ENCODE measurements at regions of chr2 and their contacts with region 1.

Region 1: DNA sequence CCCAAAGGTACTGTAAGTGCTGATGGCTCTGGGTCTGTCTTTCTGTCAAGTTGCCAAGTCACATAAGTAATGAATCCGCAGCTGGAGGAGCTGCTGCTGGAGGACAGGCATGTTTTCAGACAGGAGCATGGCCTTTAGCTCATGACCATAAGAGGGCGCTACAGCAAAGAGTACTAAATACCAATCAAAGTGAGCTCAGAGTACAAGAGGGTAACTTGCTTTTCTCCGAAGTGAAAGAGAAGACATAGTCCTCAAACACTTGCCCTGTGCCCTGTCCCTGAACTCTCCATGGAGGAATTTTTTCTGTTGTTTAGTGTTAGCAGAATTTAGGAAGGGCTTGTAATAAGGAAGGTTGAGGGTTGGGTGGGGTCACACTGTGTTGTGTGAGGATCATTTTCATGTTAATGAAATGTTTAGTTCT is 58.0 kb upstream of the EML6 start:
- DNase-seq: peak in 1 of 2 experiments; percentile 61
- H3K4me3 ChIP-seq: no peak overlapping the region
- H3K27ac ChIP-seq: no peak overlapping the region
- H3K4me1 ChIP-seq: peaks cover 0 to 3% (median 0%) of the 10 kb centered on the region in 4 experiments; a peak in 3 of 7 replicates
- H3K27me3 ChIP-seq: no peaks in the 10 kb centered on the region
- CTCF ChIP-seq: peak; percentile 46 to 81 (median 64)
- EP300 ChIP-seq: no peak
- POLR2A ChIP-seq: no peak
- RAD21 ChIP-seq: peak; percentile 60 to 72

Region 2: GRCh38 chr2:54566896-54567295 is 98.5 kb before region 1 on chr2:
- CTCF ChIA-PET with region 1: no interaction called
- POLR2A ChIA-PET with region 1: no interaction called
- DNase-seq: no peak
- H3K4me3 ChIP-seq: no peak overlapping the region
- H3K27ac ChIP-seq: no peak overlapping the region
- H3K4me1 ChIP-seq: peaks cover 5 to 20% (median 18%) of the 10 kb centered on the region in 4 experiments
- H3K27me3 ChIP-seq: no peaks in the 10 kb centered on the region
- CTCF ChIP-seq: no peak
- EP300 ChIP-seq: no peak
- POLR2A ChIP-seq: no peak
- RAD21 ChIP-seq: no peak

Region 3: DNA sequence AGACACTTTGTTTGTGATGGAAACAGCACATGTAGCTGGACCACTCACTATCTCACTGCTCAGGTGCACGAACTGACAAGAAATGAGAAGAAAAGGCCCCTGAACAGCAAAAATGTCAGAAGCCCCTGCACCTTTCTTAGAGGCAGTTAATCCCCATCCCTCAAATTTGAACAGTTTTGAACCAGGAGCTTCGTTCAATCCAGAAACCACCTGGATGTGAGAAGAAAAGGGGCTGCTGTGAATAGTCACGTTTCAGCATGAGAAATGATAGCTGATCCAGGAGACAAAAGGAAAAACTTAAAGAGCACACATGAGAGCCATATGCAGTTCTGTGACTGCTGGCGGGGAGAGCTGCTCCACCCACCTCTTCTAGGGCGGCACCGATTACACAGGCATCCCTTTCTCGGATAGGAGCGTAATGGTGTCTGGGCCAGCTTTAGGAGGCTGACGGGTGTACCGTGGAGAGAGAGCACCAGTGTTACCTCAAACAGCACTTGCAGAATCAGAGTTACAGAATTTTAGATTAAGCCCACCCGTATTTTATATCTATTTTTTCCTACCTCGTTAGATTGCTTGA is 59.0 kb before region 1 on chr2:
- CTCF ChIA-PET with region 1: interaction called, 10 read pairs
- POLR2A ChIA-PET with region 1: no interaction called
- DNase-seq: no peak
- H3K4me3 ChIP-seq: no peak overlapping the region
- H3K27ac ChIP-seq: no peak overlapping the region
- H3K4me1 ChIP-seq: peaks cover 3 to 24% (median 9%) of the 10 kb centered on the region in 4 experiments
- H3K27me3 ChIP-seq: no peaks in the 10 kb centered on the region
- CTCF ChIP-seq: no peak
- EP300 ChIP-seq: no peak
- POLR2A ChIP-seq: no peak
- RAD21 ChIP-seq: no peak

Region 4: DNA sequence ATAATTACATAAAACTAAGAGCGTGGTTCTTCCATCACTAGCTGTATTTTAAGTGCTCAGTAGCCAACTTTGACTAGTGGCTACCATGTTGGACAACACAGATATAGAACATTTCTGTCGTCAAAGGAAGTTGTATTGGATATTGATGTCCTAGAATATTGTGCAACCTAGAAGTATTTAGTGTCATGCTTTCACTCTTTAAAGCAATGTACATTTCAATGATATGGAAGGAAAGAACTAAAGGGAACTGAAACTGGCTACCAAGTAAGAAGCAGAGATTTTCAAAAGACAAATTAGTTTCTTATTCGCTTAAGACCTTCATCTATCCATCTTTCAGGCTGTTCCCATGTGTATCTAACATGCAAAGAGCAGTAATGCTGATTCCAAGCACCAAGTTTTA is 27.3 kb before region 1 on chr2:
- CTCF ChIA-PET with region 1: interaction called, 22 read pairs
- POLR2A ChIA-PET with region 1: no interaction called
- DNase-seq: no peak
- H3K4me3 ChIP-seq: no peak overlapping the region
- H3K27ac ChIP-seq: no peak overlapping the region
- H3K4me1 ChIP-seq: peaks cover 0 to 3% (median 0%) of the 10 kb centered on the region in 4 experiments; a peak in 1 of 7 replicates
- H3K27me3 ChIP-seq: no peaks in the 10 kb centered on the region
- CTCF ChIP-seq: no peak
- EP300 ChIP-seq: no peak
- POLR2A ChIP-seq: no peak
- RAD21 ChIP-seq: no peak

Region 5: DNA sequence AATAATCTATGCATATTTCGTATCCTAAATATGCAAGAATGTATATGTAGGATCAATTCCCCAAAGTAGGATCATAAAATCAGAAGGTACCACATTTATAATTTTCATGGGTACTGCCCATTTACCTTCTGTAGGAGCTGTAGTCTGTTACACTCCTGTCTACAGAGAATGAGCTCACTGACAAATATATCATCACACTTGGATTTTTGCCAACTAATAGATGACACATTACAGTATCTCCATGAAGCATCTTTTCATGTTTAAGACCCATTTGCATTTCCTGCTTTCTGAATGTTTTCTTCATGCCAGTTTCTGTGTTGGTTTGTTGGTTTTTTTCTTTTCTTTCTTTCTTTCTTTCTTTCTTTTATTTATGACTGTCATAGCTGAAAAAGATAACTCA is 12.9 kb before region 1 on chr2:
- CTCF ChIA-PET with region 1: interaction called, 47 read pairs
- POLR2A ChIA-PET with region 1: no interaction called
- DNase-seq: no peak
- H3K4me3 ChIP-seq: no peak overlapping the region
- H3K27ac ChIP-seq: no peak overlapping the region
- H3K4me1 ChIP-seq: no peaks in the 10 kb centered on the region
- H3K27me3 ChIP-seq: no peaks in the 10 kb centered on the region
- CTCF ChIP-seq: no peak
- EP300 ChIP-seq: no peak
- POLR2A ChIP-seq: no peak
- RAD21 ChIP-seq: no peak

Region 6: DNA sequence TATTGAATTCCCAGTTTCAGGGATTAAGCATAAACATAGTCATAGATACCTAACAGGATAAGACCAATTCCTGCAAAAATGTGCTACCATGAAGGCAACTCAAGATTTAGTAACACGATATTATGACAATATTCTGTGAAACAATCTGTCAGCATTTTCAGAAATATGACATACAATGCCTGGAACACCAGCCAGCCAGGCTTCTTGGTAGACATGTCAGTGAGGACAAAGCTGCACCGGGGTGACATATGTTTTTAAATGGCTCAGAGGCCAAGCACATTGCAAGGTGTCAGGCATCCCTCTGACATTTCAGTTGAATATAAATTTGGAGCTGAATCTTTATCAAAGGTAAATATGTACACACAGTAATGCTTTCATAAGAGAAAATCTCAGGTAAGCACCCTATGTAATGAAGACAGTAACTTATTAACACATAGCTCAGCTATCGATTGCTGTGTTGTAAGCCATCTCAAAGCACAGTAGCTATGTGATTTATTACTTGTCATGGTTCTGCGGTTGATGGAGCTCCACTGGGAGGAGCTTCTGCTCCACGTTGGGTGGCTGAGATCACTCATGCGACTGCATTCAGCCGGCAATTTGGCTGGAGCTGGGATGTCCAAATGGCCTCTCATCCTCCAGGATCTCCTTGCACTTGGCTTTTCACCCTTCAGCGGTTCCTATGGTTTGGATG is 26.1 kb after region 1 on chr2:
- CTCF ChIA-PET with region 1: interaction called, 43 read pairs
- POLR2A ChIA-PET with region 1: no interaction called
- DNase-seq: no peak
- H3K4me3 ChIP-seq: no peak overlapping the region
- H3K27ac ChIP-seq: no peak overlapping the region
- H3K4me1 ChIP-seq: no peaks in the 10 kb centered on the region
- H3K27me3 ChIP-seq: no peaks in the 10 kb centered on the region
- CTCF ChIP-seq: no peak
- EP300 ChIP-seq: no peak
- POLR2A ChIP-seq: no peak
- RAD21 ChIP-seq: peak; percentile 31 to 50; a peak in 3 of 4 replicates

Region 7: DNA sequence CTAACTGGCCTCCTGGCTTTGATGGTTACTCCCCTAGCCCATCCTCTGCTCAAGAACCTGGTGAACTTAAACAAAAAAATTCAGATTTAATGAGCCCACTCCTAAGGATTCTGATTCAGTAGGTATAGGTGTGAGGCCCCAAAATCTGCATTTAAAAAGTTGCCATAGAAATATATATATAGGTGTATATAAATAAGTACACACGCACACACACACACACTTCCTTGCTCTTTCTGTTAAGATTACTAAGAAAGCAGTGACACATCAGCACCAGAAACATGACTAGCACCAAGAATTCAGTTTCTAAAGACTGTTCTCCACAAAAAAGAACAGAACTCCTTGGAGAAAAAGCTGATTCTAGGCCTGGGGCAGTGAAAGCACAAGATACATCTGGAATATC is 75.8 kb after region 1 on chr2:
- CTCF ChIA-PET with region 1: no interaction called
- POLR2A ChIA-PET with region 1: no interaction called
- DNase-seq: no peak
- H3K4me3 ChIP-seq: no peak overlapping the region
- H3K27ac ChIP-seq: no peak overlapping the region
- H3K4me1 ChIP-seq: peaks cover 0 to 6% (median 2%) of the 10 kb centered on the region in 4 experiments; a peak in 2 of 7 replicates
- H3K27me3 ChIP-seq: no peaks in the 10 kb centered on the region
- CTCF ChIP-seq: no peak
- EP300 ChIP-seq: no peak
- POLR2A ChIP-seq: no peak
- RAD21 ChIP-seq: no peak

Region 8: DNA sequence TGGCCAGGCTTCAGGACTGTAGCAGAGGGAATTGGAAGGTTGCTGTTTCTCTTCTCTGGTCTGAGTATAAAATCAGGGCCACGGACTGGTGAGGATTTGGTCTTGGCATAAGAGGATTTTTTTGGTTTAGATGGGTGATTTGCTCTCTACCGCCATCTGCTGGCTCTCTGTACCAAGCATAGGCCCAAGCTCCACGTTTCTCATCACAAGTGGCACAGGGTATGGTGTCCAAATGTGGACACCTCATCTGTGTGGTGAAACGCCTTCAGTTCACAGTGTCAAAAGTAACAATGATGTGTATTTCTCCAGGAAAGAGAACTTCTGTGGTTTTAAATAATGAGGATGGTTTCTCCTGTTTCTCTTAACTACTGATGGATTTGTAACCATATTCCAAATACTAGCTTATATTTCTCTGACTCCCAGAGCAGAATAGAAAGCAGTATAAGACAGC is 173.2 kb after region 1 on chr2:
- CTCF ChIA-PET with region 1: interaction called, 10 read pairs
- POLR2A ChIA-PET with region 1: no interaction called
- DNase-seq: peak; percentile 27 to 81
- H3K4me3 ChIP-seq: no peak overlapping the region
- H3K27ac ChIP-seq: no peak overlapping the region
- H3K4me1 ChIP-seq: no peaks in the 10 kb centered on the region
- H3K27me3 ChIP-seq: no peaks in the 10 kb centered on the region; a peak in 2 of 7 replicates
- CTCF ChIP-seq: peak; percentile 69 to 88 (median 78)
- EP300 ChIP-seq: no peak
- POLR2A ChIP-seq: no peak
- RAD21 ChIP-seq: peak; percentile 68 to 76

Region 9: GRCh38 chr2:54895727-54896126 is 230.3 kb after region 1 on chr2:
- CTCF ChIA-PET with region 1: no interaction called
- POLR2A ChIA-PET with region 1: no interaction called
- DNase-seq: no peak
- H3K4me3 ChIP-seq: no peak overlapping the region
- H3K27ac ChIP-seq: no peak overlapping the region
- H3K4me1 ChIP-seq: no peaks in the 10 kb centered on the region
- H3K27me3 ChIP-seq: no peaks in the 10 kb centered on the region
- CTCF ChIP-seq: no peak
- EP300 ChIP-seq: no peak
- POLR2A ChIP-seq: no peak
- RAD21 ChIP-seq: no peak